HEK293T (cell line): ENCODE measurements at regions of chr6 and their contacts with region 1.

Region 1: DNA sequence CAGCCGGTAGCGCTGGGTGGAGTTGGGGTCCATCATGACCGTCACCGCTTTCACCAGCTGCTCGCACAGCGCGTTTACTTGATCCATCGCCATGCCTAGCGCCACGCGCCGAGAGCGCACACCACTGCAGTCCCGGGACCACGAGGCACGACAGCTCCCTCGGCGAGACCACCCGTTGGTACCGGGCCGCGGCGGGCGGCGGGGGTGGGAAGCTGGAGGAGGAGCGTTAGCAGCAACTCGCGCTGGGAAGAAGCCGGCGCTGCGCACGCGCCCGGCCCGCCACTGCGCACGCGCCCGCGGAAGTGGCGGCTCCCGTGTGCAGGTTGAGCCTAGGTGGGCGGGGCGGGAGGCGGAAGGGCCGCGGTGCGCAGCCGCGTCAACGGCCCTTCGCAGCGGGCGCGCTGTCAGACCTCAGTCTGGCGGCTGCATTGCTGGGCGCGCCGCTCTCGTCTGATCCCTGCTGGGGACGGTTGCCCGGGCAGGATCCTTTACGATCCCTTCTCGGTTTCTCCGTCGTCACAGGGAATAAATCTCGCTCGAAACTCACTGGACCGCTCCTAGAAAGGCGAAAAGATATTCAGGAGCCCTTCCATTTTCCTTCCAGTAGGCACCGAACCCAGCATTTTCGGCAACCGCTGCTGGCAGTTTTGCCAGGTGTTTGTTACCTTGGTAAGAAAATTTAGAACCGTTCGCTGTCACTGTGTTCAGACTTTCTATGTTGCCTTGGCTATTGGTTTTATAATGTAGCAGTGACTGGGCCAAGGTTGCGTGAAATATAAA is at the starts of genes POLH and XPO5:
- DNase-seq: peak; percentile 98

Region 2: GRCh38 chr6:43635387-43636307 is 59.7 kb after region 1 on chr6 and contains the start of gene MAD2L1BP:
- CTCF ChIA-PET with region 1: no interaction called
- POLR2A ChIA-PET with region 1: interaction called, 11 read pairs
- DNase-seq: peak; percentile 86

Region 3: DNA sequence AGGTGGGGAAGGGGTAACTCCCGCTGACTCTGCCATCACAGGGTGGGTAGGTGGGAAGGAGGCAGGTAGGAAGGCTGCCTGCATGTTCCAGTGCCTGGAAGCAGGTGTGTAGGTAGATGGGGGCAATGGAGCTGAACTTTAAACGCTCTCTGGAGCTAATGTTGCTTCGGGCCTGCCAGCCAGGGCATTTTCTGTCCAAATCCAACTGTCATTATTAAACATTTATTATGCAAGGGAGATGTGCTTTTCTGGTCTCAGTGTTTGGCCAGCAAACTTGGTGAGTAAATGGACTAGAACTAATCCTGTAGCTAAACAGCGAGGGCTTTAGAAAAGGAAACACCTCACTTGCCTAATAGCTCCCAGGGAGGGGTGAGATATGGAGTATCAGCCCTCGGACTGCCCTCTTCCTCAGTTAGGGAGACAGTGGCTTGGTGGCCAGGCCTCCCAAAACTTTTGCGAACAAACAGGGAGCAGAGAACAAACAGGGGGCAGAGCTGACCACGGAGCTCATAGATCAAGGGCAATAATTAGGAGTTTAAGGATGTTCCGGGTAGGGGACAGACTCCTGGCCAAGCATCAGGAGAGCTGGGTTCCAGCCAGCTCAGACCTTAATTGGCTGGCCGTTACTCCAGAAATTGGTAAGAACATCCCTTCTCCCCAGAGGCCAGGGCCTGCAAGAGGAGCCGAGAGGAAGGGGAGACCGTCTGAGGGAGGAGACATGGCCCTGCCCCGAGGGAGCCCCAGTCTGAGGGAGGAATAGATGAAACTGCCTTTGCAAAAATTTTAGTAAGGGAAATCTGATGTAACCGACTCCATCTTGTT is 325.2 kb after region 1 on chr6:
- CTCF ChIA-PET with region 1: no interaction called
- POLR2A ChIA-PET with region 1: no interaction called
- DNase-seq: no peak